ENCODE measurements at regions of chr2 and their contacts with region 1.

Region 1: GRCh38 chr2:60569680-60570111 is 16.2 kb upstream of the BCL11A start:
- DNase-seq: no peak
- H3K4me3 Mint-ChIP-seq: no peak overlapping the region
- H3K27ac Mint-ChIP-seq: no peak overlapping the region
- H3K4me1 Mint-ChIP-seq: peaks cover 6% of the 10 kb centered on the region
- H3K27me3 Mint-ChIP-seq: peaks cover 45% of the 10 kb centered on the region

Region 2: GRCh38 chr2:60555783-60556139 is 13.9 kb before region 1 on chr2:
- intact Hi-C with region 1: loop called (anchors 2 kb)
- DNase-seq: no peak
- H3K4me3 Mint-ChIP-seq: peak overlapping the region; percentile 76
- H3K27ac Mint-ChIP-seq: peak overlapping the region; percentile 67
- H3K4me1 Mint-ChIP-seq: peaks cover 16% of the 10 kb centered on the region
- H3K27me3 Mint-ChIP-seq: peaks cover 69% of the 10 kb centered on the region

Measured in activated T-helper 1 cell treated with anti-CD3 and anti-CD28 coated beads, Interleukin-12 subunit alpha, Interleukin-12 subunit beta, Interleukin-2, Interleukin-4 antibody, amounts not matched to agents 30 ng/mL and 10 ng/mL and 1 ng/mL, durations not matched to agents 14 hours and 24 hours and 36 hours (primary cell).